ENCODE measurements at regions of chr11 and their contacts with region 1.

Region 1: GRCh38 chr11:130131961-130132850 is 27.4 kb upstream of the ST14 start:
- DNase-seq: peak; percentile 34
- H3K4me3 Mint-ChIP-seq: no peak overlapping the region
- H3K27ac Mint-ChIP-seq: no peak overlapping the region
- H3K4me1 Mint-ChIP-seq: no peaks in the 10 kb centered on the region
- H3K27me3 Mint-ChIP-seq: no peaks in the 10 kb centered on the region

Region 2: DNA sequence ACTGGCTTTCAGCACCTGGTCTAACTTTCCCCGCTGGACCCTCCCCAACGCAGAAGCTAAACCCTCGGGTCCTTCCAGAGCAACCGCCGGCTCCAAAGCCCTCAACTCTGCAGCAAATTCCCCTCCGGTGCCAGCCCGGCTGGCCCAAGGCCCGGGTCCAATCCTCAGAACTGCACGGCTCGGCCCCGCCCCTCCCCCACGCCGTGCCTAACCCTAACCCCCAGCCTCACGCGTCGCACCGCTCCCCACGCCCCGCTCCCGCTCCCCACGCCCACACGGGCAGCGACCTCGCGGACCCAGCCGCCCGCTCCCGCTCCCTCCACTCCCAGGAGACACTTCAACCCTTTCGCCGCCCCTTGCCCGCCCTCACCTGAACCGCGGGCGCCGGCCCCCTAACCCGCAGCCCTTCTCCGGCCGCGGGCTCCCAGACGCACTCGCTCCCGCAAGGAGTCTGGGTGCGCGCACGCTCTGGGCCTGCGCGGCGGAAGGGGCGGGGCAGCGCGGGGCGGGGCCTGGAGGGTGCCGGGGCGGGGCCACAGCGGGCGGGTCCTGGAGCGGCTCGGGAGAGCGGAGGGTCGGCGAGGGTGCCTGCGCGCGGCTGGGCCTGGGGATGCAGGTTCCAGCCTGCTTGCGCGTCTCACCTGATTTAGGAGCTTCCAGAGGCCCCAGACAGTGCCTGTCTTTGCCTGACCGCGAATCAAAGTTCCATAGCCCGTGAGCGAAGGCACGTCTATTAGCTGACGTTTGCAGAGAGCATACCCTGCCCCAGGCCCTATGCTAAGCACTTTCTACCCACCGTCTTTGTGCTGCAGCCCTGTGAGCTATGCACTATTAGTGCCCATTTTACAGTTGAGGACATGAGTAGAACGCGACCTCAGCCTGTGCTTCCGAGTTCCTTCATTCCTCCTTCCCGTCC is 236.8 kb before region 1 on chr11 and contains the start of gene NFRKB:
- intact Hi-C with region 1: loop called (anchors 1 kb)
- DNase-seq: peak; percentile 81
- H3K4me3 Mint-ChIP-seq: peak within 1 kb of the TSS; percentile 90
- H3K27ac Mint-ChIP-seq: peak within 1 kb of the TSS; percentile 82
- H3K4me1 Mint-ChIP-seq: peaks cover 26% of the 10 kb centered on the region
- H3K27me3 Mint-ChIP-seq: no peaks in the 10 kb centered on the region
- total RNA-seq, gene NFRKB: 42.6 and 42.8 TPM in 2 replicates

Region 3: GRCh38 chr11:129922674-129923073 is 209.5 kb before region 1 on chr11:
- intact Hi-C with region 1: loop called (anchors 1 kb)
- DNase-seq: no peak
- H3K4me3 Mint-ChIP-seq: no peak overlapping the region
- H3K27ac Mint-ChIP-seq: no peak overlapping the region
- H3K4me1 Mint-ChIP-seq: peaks cover 9% of the 10 kb centered on the region
- H3K27me3 Mint-ChIP-seq: no peaks in the 10 kb centered on the region